Endothelial cell of umbilical vein (primary cell): ENCODE measurements at regions of chr2 and their contacts with region 1.

Region 1: GRCh38 chr2:152036611-152037469 is 62.0 kb downstream of the CACNB4 start:
- DNase-seq: peak; percentile 75
- H3K4me3 ChIP-seq: no peak overlapping the region
- H3K27ac ChIP-seq: no peak overlapping the region
- H3K4me1 ChIP-seq: peaks cover 3% of the 10 kb centered on the region
- H3K27me3 ChIP-seq: peaks cover 4% of the 10 kb centered on the region in 2 experiments
- CTCF ChIP-seq: peak; percentile 75 to 76
- POLR2A ChIP-seq: no peak

Region 2: GRCh38 chr2:152627351-152627957 is 590.6 kb after region 1 on chr2:
- CTCF ChIA-PET with region 1: no interaction called
- POLR2A ChIA-PET with region 1: no interaction called
- dilution Hi-C with region 1: no loop called
- intact Hi-C with region 1: loop called (anchors 2 kb)
- DNase-seq: peak; percentile 64
- H3K4me3 ChIP-seq: no peak overlapping the region
- H3K27ac ChIP-seq: no peak overlapping the region
- H3K4me1 ChIP-seq: no peaks in the 10 kb centered on the region
- H3K27me3 ChIP-seq: no peaks in the 10 kb centered on the region
- CTCF ChIP-seq: peak; percentile 43 to 46
- POLR2A ChIP-seq: no peak

Region 3: GRCh38 chr2:152648336-152648735 is 611.5 kb after region 1 on chr2:
- CTCF ChIA-PET with region 1: interaction called, 6 read pairs
- POLR2A ChIA-PET with region 1: no interaction called
- dilution Hi-C with region 1: no loop called
- intact Hi-C with region 1: loop called (anchors 5 kb)
- DNase-seq: peak; percentile 57
- H3K4me3 ChIP-seq: no peak overlapping the region
- H3K27ac ChIP-seq: no peak overlapping the region
- H3K4me1 ChIP-seq: peaks cover 5% of the 10 kb centered on the region
- H3K27me3 ChIP-seq: no peaks in the 10 kb centered on the region
- CTCF ChIP-seq: peak in 1 of 2 donors; percentile 16
- POLR2A ChIP-seq: no peak

Region 4: DNA sequence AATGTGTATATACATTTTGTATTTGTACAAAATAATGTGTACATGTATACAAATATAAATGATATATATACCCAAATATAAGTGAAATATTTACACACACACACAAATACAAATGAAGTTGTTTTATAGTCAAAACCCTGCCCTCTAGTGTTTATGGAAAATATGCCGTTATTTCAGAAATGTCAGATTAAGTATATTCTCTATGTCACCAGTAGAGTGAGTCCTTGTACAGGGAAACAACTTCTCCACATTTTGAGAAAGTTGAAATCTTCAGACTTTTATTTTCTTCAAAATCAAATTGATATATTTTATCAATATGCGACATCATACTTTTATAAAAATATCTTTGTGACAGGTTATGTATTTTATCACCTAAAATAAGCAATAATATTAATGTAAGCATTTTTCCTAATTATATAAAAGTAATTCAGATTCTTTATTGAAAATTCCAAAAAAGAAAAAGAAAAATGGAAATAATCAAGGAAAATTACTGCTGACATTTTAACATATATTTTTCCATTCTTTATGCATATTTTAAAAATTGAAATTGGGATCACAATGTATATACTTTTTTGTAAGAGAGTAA is 704.0 kb after region 1 on chr2:
- CTCF ChIA-PET with region 1: interaction called, 4 read pairs
- POLR2A ChIA-PET with region 1: no interaction called
- dilution Hi-C with region 1: no loop called
- intact Hi-C with region 1: loop called (anchors 5 kb)
- DNase-seq: peak; percentile 78
- H3K4me3 ChIP-seq: no peak overlapping the region
- H3K27ac ChIP-seq: no peak overlapping the region
- H3K4me1 ChIP-seq: peaks cover 5% of the 10 kb centered on the region
- H3K27me3 ChIP-seq: no peaks in the 10 kb centered on the region
- CTCF ChIP-seq: peak; percentile 52
- POLR2A ChIP-seq: no peak